ENCODE measurements at regions of chr19 and their contacts with region 1.

Region 1: DNA sequence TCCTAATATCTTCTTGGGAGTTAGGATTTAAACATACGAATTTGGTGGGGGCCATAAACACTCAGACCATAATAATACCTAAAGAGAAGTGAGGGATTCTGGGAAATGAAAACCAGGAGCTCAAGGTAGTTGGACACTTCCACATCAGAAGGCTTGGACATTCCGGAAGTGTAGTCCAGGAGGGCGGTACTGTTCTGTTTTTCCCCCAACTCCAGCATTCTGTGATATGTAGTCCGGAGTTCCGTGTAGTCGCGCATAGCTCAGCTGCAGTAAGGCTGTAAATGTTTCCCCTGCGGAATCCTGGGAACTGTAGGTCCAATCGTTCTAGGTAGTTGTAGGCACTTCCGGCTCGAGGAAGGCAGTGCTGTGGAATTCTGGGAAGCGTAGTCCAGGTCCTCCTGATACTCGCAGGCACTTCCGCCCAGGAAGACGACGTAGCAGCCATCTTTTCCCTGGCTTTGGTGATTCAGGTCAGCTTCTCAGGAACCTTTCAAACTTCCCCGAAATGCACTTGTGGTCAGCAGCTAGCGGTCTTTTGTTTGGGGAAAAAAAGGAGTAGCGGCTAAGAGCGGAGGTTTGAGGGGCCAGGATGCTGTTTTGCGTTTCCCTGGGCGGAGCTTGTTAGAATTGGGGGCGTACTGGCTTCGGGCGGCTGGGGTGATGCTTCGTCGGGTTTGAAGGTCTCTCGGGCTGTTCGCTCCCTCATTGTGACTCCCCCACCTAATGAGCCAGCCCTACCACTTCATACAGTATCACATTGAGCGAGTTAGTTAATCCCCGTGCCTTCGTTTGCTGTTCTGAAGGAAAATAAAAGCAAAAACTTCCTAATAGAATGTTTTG is at the start of gene ZNF226:
- DNase-seq: peak; percentile 59 to 95 (median 71)
- ATAC-seq: peak; percentile 94
- H3K4me3 ChIP-seq: peak within 1 kb of the TSS; percentile 86
- H3K4me3 Mint-ChIP-seq: peak within 1 kb of the TSS; percentile 99
- H3K27ac ChIP-seq: peak within 1 kb of the TSS; percentile 72 to 88
- H3K27ac Mint-ChIP-seq: peak within 1 kb of the TSS; percentile 98
- H3K4me1 ChIP-seq: peaks cover 19% of the 10 kb centered on the region
- H3K4me1 Mint-ChIP-seq: peaks cover 32% of the 10 kb centered on the region
- H3K27me3 ChIP-seq: no peaks in the 10 kb centered on the region
- H3K27me3 Mint-ChIP-seq: no peaks in the 10 kb centered on the region
- CTCF ChIP-seq: no peak
- total RNA-seq, gene ZNF226: 7.9 to 9.1 TPM

Region 2: GRCh38 chr19:44113138-44113783 is 51.6 kb before region 1 on chr19 and contains the start of gene ZNF225:
- CTCF ChIA-PET with region 1: no interaction called
- POLR2A ChIA-PET with region 1: interaction called, 4 read pairs
- intact Hi-C with region 1: loop called in 1 of 2 experiments (anchors 5 kb)
- DNase-seq: peak; percentile 55 to 94 (median 72)
- ATAC-seq: peak; percentile 89
- H3K4me3 ChIP-seq: peak within 1 kb of the TSS; percentile 75
- H3K4me3 Mint-ChIP-seq: peak within 1 kb of the TSS; percentile 95
- H3K27ac ChIP-seq: peak within 1 kb of the TSS in 1 of 2 donors; percentile 29
- H3K27ac Mint-ChIP-seq: peak within 1 kb of the TSS; percentile 57
- H3K4me1 ChIP-seq: peaks cover 17% of the 10 kb centered on the region
- H3K4me1 Mint-ChIP-seq: peaks cover 37% of the 10 kb centered on the region
- H3K27me3 ChIP-seq: no peaks in the 10 kb centered on the region
- H3K27me3 Mint-ChIP-seq: no peaks in the 10 kb centered on the region
- CTCF ChIP-seq: no peak
- total RNA-seq, gene ZNF225: 0.71 to 0.73 TPM

Region 3: DNA sequence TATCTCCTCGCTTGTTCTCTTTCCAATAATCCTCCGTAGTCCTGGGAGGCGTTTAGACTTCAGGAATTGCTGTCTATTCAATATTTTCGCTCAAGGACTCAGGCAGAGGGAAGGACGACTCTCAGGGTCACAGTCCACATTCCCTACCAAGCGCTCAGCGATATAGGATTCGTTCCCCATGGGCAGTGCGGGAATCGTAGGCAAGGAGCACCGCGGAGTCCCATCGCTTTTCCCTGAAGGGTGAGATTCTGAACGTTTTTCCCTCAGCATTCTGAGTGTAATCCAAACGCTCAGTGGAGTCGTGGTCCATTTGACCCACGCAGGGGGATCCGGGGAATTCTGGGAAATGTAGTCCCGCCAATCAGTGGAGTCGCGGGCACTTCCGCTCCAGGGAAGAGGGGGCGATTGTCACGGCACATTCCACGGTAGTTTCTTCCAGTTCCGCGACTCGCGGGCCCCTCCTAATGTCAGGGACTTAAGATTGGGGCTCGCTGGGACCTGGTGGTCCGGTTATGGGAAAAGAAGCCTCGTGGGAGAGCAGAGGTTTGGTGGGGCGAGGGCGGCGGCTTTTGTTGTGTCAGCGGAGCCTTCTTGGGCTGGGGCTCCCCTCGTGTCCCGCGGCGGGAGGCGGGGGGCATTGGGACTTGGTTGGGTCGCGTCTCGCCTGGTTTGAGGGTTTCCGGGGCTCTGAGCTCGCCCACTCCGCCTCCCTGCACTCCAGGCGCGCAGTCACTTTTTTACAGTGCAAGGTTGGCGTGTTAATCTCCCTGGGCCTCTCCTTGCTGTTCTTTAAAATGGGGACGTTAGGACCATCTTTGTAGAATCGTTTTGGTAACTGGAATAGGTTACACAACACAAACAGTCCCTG is 23.5 kb before region 1 on chr19 and contains the start of gene ZNF234:
- CTCF ChIA-PET with region 1: interaction called, 4 read pairs
- POLR2A ChIA-PET with region 1: interaction called, 7 read pairs
- intact Hi-C with region 1: loop called in 1 of 2 experiments (anchors 1 kb)
- DNase-seq: peak; percentile 35 to 84 (median 57)
- ATAC-seq: peak; percentile 86
- H3K4me3 ChIP-seq: peak within 1 kb of the TSS; percentile 84
- H3K4me3 Mint-ChIP-seq: peak within 1 kb of the TSS; percentile 92
- H3K27ac ChIP-seq: peak within 1 kb of the TSS; percentile 16 to 61
- H3K27ac Mint-ChIP-seq: peak within 1 kb of the TSS; percentile 79
- H3K4me1 ChIP-seq: peaks cover 13% of the 10 kb centered on the region
- H3K4me1 Mint-ChIP-seq: peaks cover 25% of the 10 kb centered on the region
- H3K27me3 ChIP-seq: no peaks in the 10 kb centered on the region
- H3K27me3 Mint-ChIP-seq: no peaks in the 10 kb centered on the region
- CTCF ChIP-seq: no peak
- total RNA-seq, gene ZNF234: 1.4 to 1.6 TPM

Region 4: DNA sequence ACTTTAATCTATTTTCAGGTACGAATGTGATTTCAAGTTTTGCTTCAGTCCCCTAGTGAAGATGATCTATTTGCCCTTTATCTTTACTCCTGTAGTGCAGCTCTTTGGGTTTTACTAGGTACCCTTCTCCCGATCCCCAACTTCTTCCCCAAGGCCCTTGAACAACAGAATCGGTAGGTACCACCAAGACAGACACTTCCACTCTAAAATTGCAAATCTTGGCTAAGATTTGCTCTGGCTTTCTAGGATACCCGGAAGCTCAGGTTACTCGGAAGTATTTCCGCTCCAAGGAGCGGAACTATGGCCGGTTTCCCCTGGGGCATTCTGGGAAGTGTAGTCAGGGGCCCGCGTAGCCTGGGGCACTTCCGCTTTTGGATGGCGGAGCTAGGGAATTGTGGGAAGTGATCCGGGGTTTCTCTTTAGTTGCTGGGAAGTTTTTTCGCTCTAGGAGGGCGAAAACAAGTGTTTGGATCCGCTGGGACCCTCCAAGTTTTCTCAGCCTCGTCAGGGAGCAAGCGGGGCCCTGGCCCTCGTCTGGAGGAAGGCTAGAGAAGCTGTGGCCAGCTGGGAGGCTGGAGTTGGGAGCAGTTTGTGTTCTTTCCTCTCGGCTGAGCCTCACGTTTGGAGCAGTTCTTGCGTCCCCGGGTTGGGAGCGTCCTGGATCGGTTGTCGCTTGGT is 42.4 kb after region 1 on chr19:
- CTCF ChIA-PET with region 1: interaction called, 3 read pairs
- POLR2A ChIA-PET with region 1: interaction called, 22 read pairs
- intact Hi-C with region 1: loop called (anchors 1 kb)
- DNase-seq: peak; percentile 51 to 91 (median 71)
- ATAC-seq: peak; percentile 81
- H3K4me3 ChIP-seq: peak overlapping the region; percentile 85
- H3K4me3 Mint-ChIP-seq: peak overlapping the region; percentile 78
- H3K27ac ChIP-seq: peak overlapping the region; percentile 64 to 76
- H3K27ac Mint-ChIP-seq: peak overlapping the region; percentile 67
- H3K4me1 ChIP-seq: peaks cover 10% of the 10 kb centered on the region
- H3K4me1 Mint-ChIP-seq: peaks cover 14% of the 10 kb centered on the region
- H3K27me3 ChIP-seq: peaks cover 0 to 7% of the 10 kb centered on the region in 2 experiments
- H3K27me3 Mint-ChIP-seq: peaks cover 10% of the 10 kb centered on the region
- CTCF ChIP-seq: no peak

Region 5: GRCh38 chr19:44212250-44212865 is 47.5 kb after region 1 on chr19 and contains the start of gene ZNF227:
- CTCF ChIA-PET with region 1: interaction called, 3 read pairs
- POLR2A ChIA-PET with region 1: interaction called, 22 read pairs
- intact Hi-C with region 1: loop called (anchors 1 kb)
- DNase-seq: peak; percentile 59 to 88 (median 76)
- ATAC-seq: peak; percentile 96
- H3K4me3 ChIP-seq: peak within 1 kb of the TSS; percentile 65
- H3K4me3 Mint-ChIP-seq: peak within 1 kb of the TSS; percentile 96
- H3K27ac ChIP-seq: peak within 1 kb of the TSS; percentile 70 to 73
- H3K27ac Mint-ChIP-seq: peak within 1 kb of the TSS; percentile 90
- H3K4me1 ChIP-seq: peaks cover 9% of the 10 kb centered on the region
- H3K4me1 Mint-ChIP-seq: peaks cover 48% of the 10 kb centered on the region
- H3K27me3 ChIP-seq: no peaks in the 10 kb centered on the region
- H3K27me3 Mint-ChIP-seq: no peaks in the 10 kb centered on the region
- CTCF ChIP-seq: no peak
- total RNA-seq, gene ZNF227: 16.2 to 17.2 TPM

Region 6: DNA sequence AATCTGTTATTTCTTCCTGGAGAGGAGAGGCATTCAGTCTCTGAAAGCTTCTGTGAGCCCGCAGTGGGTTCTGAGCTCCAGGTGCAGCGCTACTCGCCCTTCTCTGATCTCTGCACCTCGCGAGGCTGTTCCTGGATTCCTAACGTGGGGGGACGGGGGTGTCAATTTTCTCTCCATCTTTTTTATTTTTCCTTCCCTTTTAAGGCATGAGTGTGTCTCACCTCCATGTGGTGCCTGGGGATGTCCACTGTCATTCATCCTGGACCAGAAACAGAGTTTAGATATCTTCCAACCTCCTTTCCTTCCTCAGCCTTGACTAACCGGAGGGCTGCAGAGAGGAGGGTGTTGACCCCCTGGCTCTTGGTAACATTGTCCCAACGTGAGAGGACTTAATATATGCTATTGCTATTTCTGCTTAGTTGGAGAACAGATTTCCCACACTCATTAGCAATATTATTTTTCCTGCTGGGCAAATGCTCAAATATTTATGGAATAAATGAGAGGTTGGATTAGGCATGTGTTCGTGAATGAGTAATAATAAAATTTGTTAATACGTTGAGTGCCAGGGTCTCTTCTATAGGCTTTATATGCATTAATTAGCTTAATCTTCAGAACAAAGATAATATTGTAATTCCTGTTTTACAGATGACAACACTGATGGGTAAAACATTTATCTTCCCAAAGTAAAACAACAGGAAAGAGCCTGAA is 95.6 kb after region 1 on chr19:
- CTCF ChIA-PET with region 1: no interaction called
- POLR2A ChIA-PET with region 1: no interaction called
- intact Hi-C with region 1: no loop called
- DNase-seq: no peak
- ATAC-seq: no peak
- H3K4me3 ChIP-seq: peak overlapping the region; percentile 35
- H3K4me3 Mint-ChIP-seq: peak overlapping the region; percentile 81
- H3K27ac ChIP-seq: no peak overlapping the region
- H3K27ac Mint-ChIP-seq: no peak overlapping the region
- H3K4me1 ChIP-seq: peaks cover 3% of the 10 kb centered on the region
- H3K4me1 Mint-ChIP-seq: peaks cover 13% of the 10 kb centered on the region
- H3K27me3 ChIP-seq: no peaks in the 10 kb centered on the region
- H3K27me3 Mint-ChIP-seq: no peaks in the 10 kb centered on the region
- CTCF ChIP-seq: no peak

Region 7: GRCh38 chr19:44304659-44305193 is 139.8 kb after region 1 on chr19 and contains the start of gene ZNF235:
- CTCF ChIA-PET with region 1: no interaction called
- POLR2A ChIA-PET with region 1: interaction called, 4 read pairs
- intact Hi-C with region 1: loop called in 1 of 2 experiments (anchors 2 kb)
- DNase-seq: peak; percentile 24 to 88 (median 60)
- ATAC-seq: peak; percentile 97
- H3K4me3 ChIP-seq: peak within 1 kb of the TSS; percentile 96
- H3K4me3 Mint-ChIP-seq: peak within 1 kb of the TSS; percentile 92
- H3K27ac ChIP-seq: peak within 1 kb of the TSS in 1 of 2 donors; percentile 58
- H3K27ac Mint-ChIP-seq: peak within 1 kb of the TSS; percentile 11
- H3K4me1 ChIP-seq: peaks cover 19% of the 10 kb centered on the region
- H3K4me1 Mint-ChIP-seq: peaks cover 18% of the 10 kb centered on the region
- H3K27me3 ChIP-seq: no peaks in the 10 kb centered on the region
- H3K27me3 Mint-ChIP-seq: peaks cover 5% of the 10 kb centered on the region
- CTCF ChIP-seq: no peak
- total RNA-seq, gene ZNF235: 2.4 TPM

Region 8: GRCh38 chr19:44500148-44500956 is 335.5 kb after region 1 on chr19 and contains the start of gene ZNF180:
- CTCF ChIA-PET with region 1: interaction called, 4 read pairs
- POLR2A ChIA-PET with region 1: interaction called, 3 read pairs
- intact Hi-C with region 1: loop called in 1 of 2 experiments (anchors 10 kb)
- DNase-seq: peak; percentile 89 to 98 (median 94)
- ATAC-seq: peak; percentile 91
- H3K4me3 ChIP-seq: peak within 1 kb of the TSS; percentile 88
- H3K4me3 Mint-ChIP-seq: peak within 1 kb of the TSS; percentile 95
- H3K27ac ChIP-seq: peak within 1 kb of the TSS; percentile 63 to 74
- H3K27ac Mint-ChIP-seq: peak within 1 kb of the TSS; percentile 79
- H3K4me1 ChIP-seq: peaks cover 26% of the 10 kb centered on the region
- H3K4me1 Mint-ChIP-seq: peaks cover 38% of the 10 kb centered on the region
- H3K27me3 ChIP-seq: peaks cover 1 to 5% of the 10 kb centered on the region in 2 experiments
- H3K27me3 Mint-ChIP-seq: peaks cover 17% of the 10 kb centered on the region
- CTCF ChIP-seq: peak; percentile 60
- total RNA-seq, gene ZNF180: 7.6 to 9.4 TPM

Measured in CD4-positive, alpha-beta T cell (primary cell).